ENCODE measurements at regions of chr10 and their contacts with region 1.

Region 1: GRCh38 chr10:62231371-62231770 is 37.3 kb downstream of the RTKN2 start:
- DNase-seq: peak; percentile 78
- H3K4me3 ChIP-seq: no peak overlapping the region
- H3K27ac ChIP-seq: peak overlapping the region; percentile 76
- H3K4me1 ChIP-seq: peaks cover 21% of the 10 kb centered on the region
- H3K27me3 ChIP-seq: no peaks in the 10 kb centered on the region
- CTCF ChIP-seq: no peak
- POLR2A ChIP-seq: no peak

Region 2: GRCh38 chr10:60978287-60979115 is 1252.9 kb before region 1 on chr10:
- CTCF ChIA-PET with region 1: no interaction called
- POLR2A ChIA-PET with region 1: no interaction called
- dilution Hi-C with region 1: no loop called
- intact Hi-C with region 1: loop called (anchors 10 kb)
- DNase-seq: peak; percentile 94
- H3K4me3 ChIP-seq: no peak overlapping the region
- H3K27ac ChIP-seq: peak overlapping the region; percentile 89
- H3K4me1 ChIP-seq: peaks cover 41% of the 10 kb centered on the region
- H3K27me3 ChIP-seq: no peaks in the 10 kb centered on the region
- CTCF ChIP-seq: no peak
- POLR2A ChIP-seq: no peak

Region 3: GRCh38 chr10:62171791-62172190 is 59.6 kb before region 1 on chr10:
- CTCF ChIA-PET with region 1: no interaction called
- POLR2A ChIA-PET with region 1: no interaction called
- dilution Hi-C with region 1: no loop called
- intact Hi-C with region 1: no loop called
- DNase-seq: peak; percentile 80
- H3K4me3 ChIP-seq: no peak overlapping the region
- H3K27ac ChIP-seq: no peak overlapping the region
- H3K4me1 ChIP-seq: no peaks in the 10 kb centered on the region
- H3K27me3 ChIP-seq: no peaks in the 10 kb centered on the region
- CTCF ChIP-seq: no peak
- POLR2A ChIP-seq: no peak

Region 4: DNA sequence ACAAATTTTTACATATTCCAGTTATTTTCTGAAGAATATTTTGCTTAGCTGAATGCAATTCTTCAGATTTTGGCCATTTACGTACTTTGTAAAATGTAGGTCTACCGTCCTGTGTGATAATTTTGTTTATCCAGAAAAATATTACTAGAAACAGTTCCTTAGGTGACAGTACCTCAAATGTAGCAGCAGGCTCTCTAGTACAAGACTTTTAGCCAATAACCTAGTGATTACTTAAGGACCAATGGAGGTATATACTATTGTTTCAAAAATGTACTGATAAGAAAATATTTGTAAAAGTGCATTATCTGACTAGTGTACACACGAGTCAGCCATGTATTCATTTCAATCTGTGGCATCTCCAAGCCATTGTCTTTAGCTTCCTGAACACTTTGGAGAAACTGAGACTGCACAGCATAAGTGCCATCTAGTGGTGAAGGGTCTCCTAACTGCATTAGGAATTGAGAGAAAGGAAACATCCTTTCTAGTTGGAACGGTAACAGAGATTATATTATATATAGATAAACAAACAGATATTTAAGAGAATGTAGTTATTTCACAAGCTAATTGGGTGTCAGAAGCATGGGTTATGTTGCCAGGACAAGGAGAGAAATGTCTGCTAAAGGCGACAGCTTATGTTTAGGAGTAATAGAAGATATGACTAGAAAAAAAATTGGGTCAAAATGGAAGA is 13.6 kb after region 1 on chr10:
- CTCF ChIA-PET with region 1: interaction called, 17 read pairs
- POLR2A ChIA-PET with region 1: interaction called, 3 read pairs
- dilution Hi-C with region 1: no loop called
- intact Hi-C with region 1: no loop called
- DNase-seq: peak; percentile 86
- H3K4me3 ChIP-seq: no peak overlapping the region
- H3K27ac ChIP-seq: no peak overlapping the region
- H3K4me1 ChIP-seq: peaks cover 17% of the 10 kb centered on the region
- H3K27me3 ChIP-seq: no peaks in the 10 kb centered on the region
- CTCF ChIP-seq: peak; percentile 63 to 71
- POLR2A ChIP-seq: no peak

Measured in endothelial cell of umbilical vein (primary cell).